Activated CD4-positive, alpha-beta memory T cell treated with anti-CD3 and anti-CD28 coated beads for 36 hours (primary cell): ENCODE measurements at regions of chr3 and their contacts with region 1.

Region 1: DNA sequence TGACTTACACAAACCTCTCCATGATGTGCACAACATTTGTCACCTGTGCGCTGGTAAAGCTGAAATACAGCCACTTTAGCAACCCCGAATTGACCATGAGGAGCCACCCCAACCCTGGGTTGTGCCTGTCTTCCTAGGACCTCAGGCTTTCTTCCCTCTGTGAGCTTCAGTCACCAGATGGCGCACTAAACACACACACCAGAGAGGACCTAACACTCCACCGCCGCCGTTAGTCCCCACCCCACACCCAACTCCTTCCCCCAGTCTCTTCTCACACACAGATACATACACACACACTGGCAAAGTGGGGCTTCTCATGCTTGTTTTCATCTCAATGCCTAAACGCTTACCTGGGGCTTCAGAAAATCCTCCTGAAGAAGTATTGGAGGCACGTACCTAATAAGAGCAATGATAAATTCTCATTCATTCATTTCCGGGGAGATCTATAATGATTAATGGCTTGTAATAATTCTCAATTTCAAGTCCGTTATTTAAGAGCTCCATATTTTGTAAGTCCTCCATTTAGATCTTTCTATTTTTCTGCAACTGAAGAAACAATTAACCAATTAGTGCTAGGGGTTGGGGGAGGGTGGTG is 2.1 kb upstream of the CCDC80 start:
- DNase-seq: peak; percentile 89
- H3K4me3 Mint-ChIP-seq: peak overlapping the region; percentile 63
- H3K27ac Mint-ChIP-seq: no peak overlapping the region
- H3K4me1 Mint-ChIP-seq: peaks cover 16% of the 10 kb centered on the region
- H3K27me3 Mint-ChIP-seq: peaks cover 3% of the 10 kb centered on the region

Region 2: DNA sequence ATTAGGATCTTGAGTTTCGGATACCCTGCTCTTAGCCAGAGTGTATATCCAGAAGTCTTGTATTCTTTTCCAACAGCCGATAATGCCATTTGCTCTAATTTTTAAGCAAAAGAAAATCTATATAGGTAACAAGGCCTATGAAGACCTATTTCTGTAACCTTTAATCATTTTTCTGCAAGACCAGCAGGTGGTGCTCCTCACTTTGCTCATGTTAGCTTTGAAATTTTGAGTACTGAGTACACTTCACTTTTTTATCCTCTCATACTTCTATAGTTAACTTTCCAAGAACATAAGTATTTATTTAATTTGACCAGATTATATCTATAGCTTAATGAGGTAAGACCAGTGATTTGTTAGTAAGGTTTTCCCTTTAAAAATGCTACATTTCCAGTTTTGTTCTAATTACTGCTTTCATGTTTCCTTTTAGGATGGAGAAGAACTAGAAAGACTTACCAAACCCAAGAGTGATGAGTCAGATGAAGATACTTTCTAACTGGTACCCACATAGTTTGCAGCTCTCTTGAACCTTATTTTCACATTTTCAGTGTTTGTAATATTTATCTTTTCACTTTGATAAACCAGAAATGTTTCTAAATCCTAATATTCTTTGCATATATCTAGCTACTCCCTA is 60.6 kb before region 1 on chr3:
- CTCF ChIA-PET with region 1: interaction called, 24 read pairs
- POLR2A ChIA-PET with region 1: no interaction called
- intact Hi-C with region 1: loop called (anchors 5 kb)
- DNase-seq: peak; percentile 56
- H3K4me3 Mint-ChIP-seq: no peak overlapping the region
- H3K27ac Mint-ChIP-seq: no peak overlapping the region
- H3K4me1 Mint-ChIP-seq: peaks cover 5% of the 10 kb centered on the region
- H3K27me3 Mint-ChIP-seq: no peaks in the 10 kb centered on the region

Region 3: DNA sequence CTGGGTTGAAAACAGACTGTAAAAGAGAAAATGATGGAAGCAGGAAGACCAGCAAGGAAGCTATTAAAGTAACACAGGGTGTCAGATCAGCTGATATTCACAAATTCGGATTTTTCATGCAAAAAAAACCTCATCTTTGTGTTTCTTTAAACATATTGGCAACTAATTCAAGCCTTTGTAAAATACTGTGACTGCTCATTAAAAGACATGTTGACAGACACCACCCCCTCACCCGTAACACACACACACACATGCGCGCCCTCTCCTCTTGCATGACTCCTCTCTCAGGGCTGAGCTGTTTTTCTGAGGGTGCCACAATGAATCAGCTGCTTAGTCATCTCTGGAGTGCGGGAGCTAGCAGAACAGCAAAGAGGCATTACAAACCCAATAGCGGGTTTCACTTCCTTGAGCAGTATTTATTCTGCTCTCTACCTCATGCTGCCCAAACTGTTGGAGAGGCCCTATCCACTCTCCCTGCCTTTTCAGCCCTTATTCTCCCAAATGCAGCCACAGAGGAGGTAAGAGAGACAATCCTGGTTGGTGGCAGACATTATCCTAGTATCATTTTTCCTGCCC is 33.7 kb after region 1 on chr3:
- CTCF ChIA-PET with region 1: interaction called, 3 read pairs
- POLR2A ChIA-PET with region 1: no interaction called
- intact Hi-C with region 1: loop called (anchors 1 kb)
- DNase-seq: peak; percentile 96
- H3K4me3 Mint-ChIP-seq: peak overlapping the region; percentile 14
- H3K27ac Mint-ChIP-seq: peak overlapping the region; percentile 14
- H3K4me1 Mint-ChIP-seq: peaks cover 52% of the 10 kb centered on the region
- H3K27me3 Mint-ChIP-seq: peaks cover 14% of the 10 kb centered on the region

Region 4: GRCh38 chr3:112979240-112979832 is 336.3 kb after region 1 on chr3:
- CTCF ChIA-PET with region 1: interaction called, 79 read pairs
- POLR2A ChIA-PET with region 1: no interaction called
- intact Hi-C with region 1: loop called (anchors 1 kb)
- DNase-seq: no peak
- H3K4me3 Mint-ChIP-seq: no peak overlapping the region
- H3K27ac Mint-ChIP-seq: no peak overlapping the region
- H3K4me1 Mint-ChIP-seq: peaks cover 68% of the 10 kb centered on the region
- H3K27me3 Mint-ChIP-seq: no peaks in the 10 kb centered on the region

Region 5: DNA sequence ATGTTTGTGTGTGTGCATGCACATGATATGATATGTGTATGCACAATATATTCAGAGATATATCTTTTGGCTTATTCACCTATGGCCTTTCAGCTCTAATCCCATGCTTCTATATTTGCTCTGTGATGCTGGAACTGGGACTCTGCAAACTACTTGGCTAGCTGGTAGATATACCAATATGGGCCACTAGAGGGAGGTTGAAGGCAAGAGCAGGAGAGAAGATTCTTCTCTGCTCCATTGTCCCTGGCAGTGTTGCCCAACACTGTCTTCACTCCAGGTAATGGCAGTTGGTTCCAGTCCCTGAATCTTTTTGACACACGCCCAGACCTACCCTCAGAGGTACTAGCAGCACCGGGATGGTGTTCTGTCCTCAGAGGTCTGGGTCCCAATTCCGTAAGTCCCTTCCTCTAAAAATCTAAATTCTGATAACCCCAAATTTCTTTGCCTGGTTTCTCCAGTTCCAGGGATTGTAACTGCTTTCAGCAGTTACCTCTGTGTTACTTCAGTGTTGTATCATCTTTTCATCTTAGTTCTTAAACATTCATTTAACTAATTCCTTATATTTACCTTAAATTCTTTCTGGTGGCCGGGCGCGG is 392.5 kb after region 1 on chr3:
- CTCF ChIA-PET with region 1: interaction called, 20 read pairs
- POLR2A ChIA-PET with region 1: no interaction called
- intact Hi-C with region 1: no loop called
- DNase-seq: peak; percentile 17
- H3K4me3 Mint-ChIP-seq: no peak overlapping the region
- H3K27ac Mint-ChIP-seq: no peak overlapping the region
- H3K4me1 Mint-ChIP-seq: no peaks in the 10 kb centered on the region
- H3K27me3 Mint-ChIP-seq: no peaks in the 10 kb centered on the region